Activated CD4-positive, alpha-beta memory T cell treated with anti-CD3 and anti-CD28 coated beads for 36 hours (primary cell): ENCODE measurements at regions of chr19 and their contacts with region 1.

Region 1: GRCh38 chr19:11798391-11799330 is at the start of gene ZNF491:
- DNase-seq: peak; percentile 93
- H3K4me3 Mint-ChIP-seq: peak within 1 kb of the TSS; percentile 84
- H3K27ac Mint-ChIP-seq: no peak within 1 kb of the TSS
- H3K4me1 Mint-ChIP-seq: peaks cover 16% of the 10 kb centered on the region
- H3K27me3 Mint-ChIP-seq: no peaks in the 10 kb centered on the region
- total RNA-seq, gene ZNF491: 0.33 to 0.46 TPM

Region 2: GRCh38 chr19:11749754-11750153 is 48.9 kb before region 1 on chr19:
- CTCF ChIA-PET with region 1: no interaction called
- POLR2A ChIA-PET with region 1: no interaction called
- intact Hi-C with region 1: no loop called
- DNase-seq: no peak
- H3K4me3 Mint-ChIP-seq: no peak overlapping the region
- H3K27ac Mint-ChIP-seq: no peak overlapping the region
- H3K4me1 Mint-ChIP-seq: no peaks in the 10 kb centered on the region
- H3K27me3 Mint-ChIP-seq: peaks cover 3% of the 10 kb centered on the region

Region 3: DNA sequence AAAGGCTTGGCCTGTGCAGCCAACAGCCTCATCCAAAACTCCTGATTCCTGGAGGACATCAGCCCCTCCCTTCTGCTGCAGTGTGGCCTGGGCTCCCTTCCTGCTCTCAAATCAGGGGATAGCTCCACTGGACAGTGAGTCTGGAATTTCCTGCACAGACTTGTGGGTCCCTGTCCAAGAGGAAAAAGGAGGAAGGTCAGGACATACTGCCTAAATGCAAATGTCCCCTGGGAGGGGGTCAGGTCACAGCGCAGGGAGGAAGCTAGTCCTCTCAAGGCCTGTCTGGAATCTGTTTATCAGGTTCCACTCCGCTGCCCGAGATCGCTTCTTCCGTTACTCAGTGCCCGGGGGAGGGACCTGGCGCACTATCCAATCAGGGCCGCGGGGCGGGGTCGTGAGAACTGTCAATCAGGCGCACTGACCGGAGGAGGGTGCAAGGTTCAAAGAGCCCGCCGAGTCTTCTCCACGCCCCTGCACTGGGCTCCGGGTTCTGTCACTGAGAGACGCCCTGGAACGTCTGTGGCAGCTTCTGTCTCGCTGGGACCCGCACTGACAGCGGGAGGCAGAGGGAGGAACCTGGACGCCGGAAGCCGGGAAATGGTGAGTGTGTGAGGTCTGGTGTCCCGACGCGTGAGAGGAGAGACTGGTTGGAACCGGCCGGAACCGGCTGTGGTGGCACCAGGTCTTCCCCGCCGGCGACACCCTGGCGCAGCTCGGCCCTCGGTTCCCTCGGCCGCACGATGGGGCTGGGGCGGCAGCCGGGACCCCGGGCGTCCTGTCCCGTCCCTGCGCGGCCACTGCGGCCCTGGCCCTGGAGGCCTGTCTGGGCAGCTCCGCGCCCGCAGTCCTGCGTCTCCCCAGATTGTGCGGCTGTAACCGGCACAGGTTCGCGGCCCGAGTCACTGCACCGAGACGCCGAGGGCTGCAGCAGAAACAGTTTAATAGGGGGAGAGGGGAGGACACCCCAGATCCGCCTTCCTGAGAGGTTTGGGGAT is 31.8 kb before region 1 on chr19 and contains the start of gene ZNF441:
- CTCF ChIA-PET with region 1: interaction called, 11 read pairs
- POLR2A ChIA-PET with region 1: no interaction called
- intact Hi-C with region 1: no loop called
- DNase-seq: peak; percentile 97
- H3K4me3 Mint-ChIP-seq: peak within 1 kb of the TSS; percentile 98
- H3K27ac Mint-ChIP-seq: peak within 1 kb of the TSS; percentile 95
- H3K4me1 Mint-ChIP-seq: peaks cover 16% of the 10 kb centered on the region
- H3K27me3 Mint-ChIP-seq: peaks cover 5% of the 10 kb centered on the region
- total RNA-seq, gene ZNF441: 6.4 TPM

Region 4: GRCh38 chr19:11814029-11814699 is 15.5 kb after region 1 on chr19 and contains the start of gene ZNF440:
- CTCF ChIA-PET with region 1: interaction called, 85 read pairs
- POLR2A ChIA-PET with region 1: interaction called, 3 read pairs
- intact Hi-C with region 1: loop called (anchors 1 kb)
- DNase-seq: peak; percentile 94
- H3K4me3 Mint-ChIP-seq: peak within 1 kb of the TSS; percentile 85
- H3K27ac Mint-ChIP-seq: peak within 1 kb of the TSS; percentile 45
- H3K4me1 Mint-ChIP-seq: peaks cover 15% of the 10 kb centered on the region
- H3K27me3 Mint-ChIP-seq: no peaks in the 10 kb centered on the region
- total RNA-seq, gene ZNF440: 5.7 to 6.4 TPM

Region 5: GRCh38 chr19:11848594-11849469 is 50.2 kb after region 1 on chr19 and contains the start of gene ZNF439:
- CTCF ChIA-PET with region 1: no interaction called
- POLR2A ChIA-PET with region 1: no interaction called
- intact Hi-C with region 1: no loop called
- DNase-seq: peak; percentile 94
- H3K4me3 Mint-ChIP-seq: peak within 1 kb of the TSS; percentile 83
- H3K27ac Mint-ChIP-seq: peak within 1 kb of the TSS; percentile 66
- H3K4me1 Mint-ChIP-seq: peaks cover 17% of the 10 kb centered on the region
- H3K27me3 Mint-ChIP-seq: no peaks in the 10 kb centered on the region
- total RNA-seq, gene ZNF439: 4.8 to 5.6 TPM

Region 6: DNA sequence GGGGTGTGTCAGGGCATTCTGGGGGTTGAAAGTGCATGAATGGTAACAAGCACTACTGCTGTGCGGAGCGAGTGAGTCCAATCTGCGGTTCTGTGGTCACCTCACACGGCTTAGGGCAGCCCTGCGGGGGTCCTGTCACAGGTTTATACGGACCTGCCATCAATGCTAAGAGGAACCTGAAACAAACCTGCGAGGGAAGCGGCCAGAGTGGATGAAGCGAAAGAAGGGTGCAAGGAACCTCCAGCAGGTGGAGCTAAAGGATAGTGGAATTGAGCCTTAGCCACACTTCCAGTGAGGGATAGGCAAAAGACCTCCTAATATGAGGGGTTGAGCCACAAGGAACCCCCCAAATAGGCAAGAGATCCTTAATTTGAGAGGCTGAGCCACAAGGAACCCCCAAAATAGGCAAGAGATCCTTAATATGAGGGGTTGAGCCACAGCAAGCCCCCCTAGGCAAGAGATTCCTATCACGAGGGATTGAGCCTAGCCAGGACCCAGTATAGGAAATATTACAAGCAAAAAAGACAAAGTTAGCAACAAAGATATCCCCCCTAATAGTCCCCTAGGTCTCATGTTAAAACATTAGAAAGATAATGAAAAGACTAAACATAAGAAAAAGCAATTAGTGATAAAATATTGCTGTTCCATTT is 82.6 kb after region 1 on chr19:
- CTCF ChIA-PET with region 1: interaction called, 42 read pairs
- POLR2A ChIA-PET with region 1: no interaction called
- intact Hi-C with region 1: loop called (anchors 2 kb)
- DNase-seq: peak; percentile 69
- H3K4me3 Mint-ChIP-seq: no peak overlapping the region
- H3K27ac Mint-ChIP-seq: no peak overlapping the region
- H3K4me1 Mint-ChIP-seq: no peaks in the 10 kb centered on the region
- H3K27me3 Mint-ChIP-seq: no peaks in the 10 kb centered on the region

Region 7: DNA sequence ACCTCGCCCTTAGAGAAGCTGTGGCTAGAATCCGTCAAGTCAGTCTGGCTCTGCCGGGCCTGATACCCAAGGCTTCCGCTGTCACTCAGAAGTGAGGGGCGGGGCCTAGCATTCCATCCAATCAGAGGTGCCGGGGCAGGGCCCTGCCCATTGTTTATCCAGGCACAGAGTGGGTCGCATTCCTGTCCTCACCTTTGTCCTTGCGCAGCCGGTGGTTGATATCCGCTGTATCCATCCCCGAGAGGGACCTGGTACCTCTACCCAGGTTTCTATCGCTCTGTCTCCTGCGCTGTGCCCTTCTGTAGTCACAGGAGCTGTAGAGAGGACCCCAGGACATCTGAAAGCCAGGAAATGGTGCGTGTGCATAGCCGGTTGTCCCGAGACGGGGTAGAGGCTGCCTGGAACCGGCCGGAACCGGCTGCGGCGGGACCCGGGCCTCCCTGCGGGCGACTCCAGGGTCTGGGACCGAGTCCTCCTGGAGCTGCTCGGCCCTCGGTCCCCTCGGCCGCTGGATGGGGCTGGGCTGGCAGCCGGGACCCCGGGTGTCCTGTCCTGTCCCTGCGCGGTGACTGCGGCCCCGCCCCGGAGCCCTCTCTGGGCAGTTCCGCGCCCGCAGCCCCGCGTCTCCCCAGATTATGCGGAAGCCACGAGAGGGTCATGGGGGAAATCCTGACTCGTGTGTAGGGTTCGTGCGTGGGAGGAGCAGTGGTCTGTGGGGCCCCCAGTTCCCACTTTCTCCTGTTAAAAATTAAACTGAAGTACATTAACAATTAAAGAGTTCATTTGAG is 166.4 kb after region 1 on chr19 and contains the start of gene ZNF763:
- CTCF ChIA-PET with region 1: interaction called, 12 read pairs
- POLR2A ChIA-PET with region 1: no interaction called
- intact Hi-C with region 1: no loop called
- DNase-seq: peak; percentile 94
- H3K4me3 Mint-ChIP-seq: peak within 1 kb of the TSS; percentile 88
- H3K27ac Mint-ChIP-seq: peak within 1 kb of the TSS; percentile 79
- H3K4me1 Mint-ChIP-seq: peaks cover 20% of the 10 kb centered on the region
- H3K27me3 Mint-ChIP-seq: no peaks in the 10 kb centered on the region
- total RNA-seq, gene ZNF763: 0.97 to 1.6 TPM

Region 8: GRCh38 chr19:12052497-12053169 is 254.0 kb after region 1 on chr19 and contains the start of gene ZNF878:
- CTCF ChIA-PET with region 1: interaction called, 5 read pairs
- POLR2A ChIA-PET with region 1: no interaction called
- intact Hi-C with region 1: loop called (anchors 5 kb)
- DNase-seq: peak; percentile 76
- H3K4me3 Mint-ChIP-seq: peak within 1 kb of the TSS; percentile 71
- H3K27ac Mint-ChIP-seq: no peak within 1 kb of the TSS
- H3K4me1 Mint-ChIP-seq: peaks cover 9% of the 10 kb centered on the region
- H3K27me3 Mint-ChIP-seq: peaks cover 15% of the 10 kb centered on the region
- total RNA-seq, gene ZNF878: 0.57 to 0.80 TPM